ENCODE measurements at regions of chr12 and their contacts with region 1.

Region 1: DNA sequence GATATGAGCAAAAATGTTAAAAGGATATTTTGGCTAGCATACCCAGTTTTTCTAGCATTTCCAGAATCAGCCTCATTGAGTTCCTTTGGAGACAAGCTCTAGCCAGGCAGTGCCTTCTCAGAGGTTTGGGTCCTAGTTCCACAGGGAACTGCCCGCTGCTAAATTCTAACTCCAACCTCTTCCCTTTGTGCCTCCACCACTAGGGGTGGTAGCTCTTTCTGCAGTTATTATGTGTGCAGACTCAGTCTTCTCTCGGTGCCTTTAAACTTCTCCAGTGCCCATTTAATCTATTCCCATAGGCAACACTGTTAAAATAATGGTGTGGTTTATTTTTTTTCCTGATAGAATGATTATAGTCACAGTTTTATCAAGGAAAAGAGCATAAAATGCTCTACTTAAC is 21.5 kb upstream of the SLC25A3 start:
- DNase-seq: no peak
- H3K4me3 ChIP-seq: no peak overlapping the region
- H3K27ac ChIP-seq: no peak overlapping the region
- H3K4me1 ChIP-seq: no peaks in the 10 kb centered on the region
- H3K27me3 ChIP-seq: no peaks in the 10 kb centered on the region
- CTCF ChIP-seq: peak in 2 of 6 experiments; percentile 16 to 20
- POLR2A ChIP-seq: no peak

Region 2: GRCh38 chr12:98388126-98388525 is 183.9 kb before region 1 on chr12:
- intact Hi-C with region 1: no loop called
- DNase-seq: no peak
- H3K4me3 ChIP-seq: no peak overlapping the region
- H3K27ac ChIP-seq: no peak overlapping the region
- H3K4me1 ChIP-seq: no peaks in the 10 kb centered on the region
- H3K27me3 ChIP-seq: no peaks in the 10 kb centered on the region
- CTCF ChIP-seq: no peak
- POLR2A ChIP-seq: no peak

Region 3: DNA sequence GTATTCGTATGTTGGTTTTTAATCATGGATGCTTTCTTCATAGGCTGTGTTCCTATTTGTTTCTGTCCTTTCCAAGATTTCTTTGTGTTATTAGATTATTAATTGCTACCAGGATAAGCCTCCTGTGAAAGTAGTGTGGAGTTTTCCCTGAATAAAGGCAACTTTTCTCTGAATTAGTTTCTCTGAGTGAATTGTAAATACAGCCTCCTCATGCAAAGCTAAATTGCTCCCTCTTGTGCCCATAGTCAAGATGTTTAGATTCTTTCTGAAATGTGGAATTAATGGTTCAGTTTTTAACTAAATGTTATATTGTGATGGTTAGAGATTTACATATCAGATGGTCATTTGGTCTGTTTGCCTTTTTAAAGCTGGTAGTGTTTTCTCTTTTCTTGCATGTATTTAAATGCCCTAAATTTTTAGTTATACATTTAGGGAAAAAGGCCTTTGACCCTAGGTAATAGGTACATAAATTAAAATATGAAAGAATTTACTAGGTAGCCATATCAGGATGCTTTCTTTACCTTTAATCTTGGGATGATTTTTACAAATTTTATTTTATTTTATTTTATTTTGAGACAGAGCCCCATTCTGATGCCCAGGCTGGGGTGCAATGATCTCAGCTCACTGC is 82.0 kb after region 1 on chr12:
- intact Hi-C with region 1: loop called in 1 of 2 experiments (anchors 5 kb)
- DNase-seq: peak in 1 of 7 donors; percentile 27
- H3K4me3 ChIP-seq: no peak overlapping the region
- H3K27ac ChIP-seq: no peak overlapping the region
- H3K4me1 ChIP-seq: no peaks in the 10 kb centered on the region
- H3K27me3 ChIP-seq: no peaks in the 10 kb centered on the region
- CTCF ChIP-seq: peak; percentile 31 to 74 (median 67)
- POLR2A ChIP-seq: no peak

Region 4: DNA sequence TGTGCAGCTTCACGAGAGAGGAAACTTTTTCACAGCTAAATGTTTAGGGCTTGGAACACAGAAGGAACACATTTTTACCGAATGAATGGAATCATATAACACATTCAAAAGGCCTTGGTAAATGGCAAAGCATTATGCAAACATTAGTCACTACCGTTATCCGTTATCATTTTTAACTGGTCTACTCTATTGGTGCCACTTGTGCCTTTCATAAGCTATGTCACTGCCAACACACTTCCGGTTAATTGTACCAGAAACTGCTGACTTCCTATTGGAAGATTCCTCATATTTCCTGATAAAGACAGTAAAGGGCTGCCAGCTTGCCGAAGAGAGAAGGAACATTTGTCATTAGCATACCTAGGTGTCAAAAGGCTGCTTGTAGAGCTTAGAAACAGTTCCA is 242.2 kb after region 1 on chr12:
- intact Hi-C with region 1: no loop called
- DNase-seq: peak in 2 of 7 donors; percentile 22 to 37
- H3K4me3 ChIP-seq: no peak overlapping the region
- H3K27ac ChIP-seq: no peak overlapping the region
- H3K4me1 ChIP-seq: no peaks in the 10 kb centered on the region
- H3K27me3 ChIP-seq: no peaks in the 10 kb centered on the region
- CTCF ChIP-seq: no peak
- POLR2A ChIP-seq: no peak

Measured in adrenal gland (tissue), 19 donors.